ENCODE measurements at regions of chrX and their contacts with region 1.

Region 1: DNA sequence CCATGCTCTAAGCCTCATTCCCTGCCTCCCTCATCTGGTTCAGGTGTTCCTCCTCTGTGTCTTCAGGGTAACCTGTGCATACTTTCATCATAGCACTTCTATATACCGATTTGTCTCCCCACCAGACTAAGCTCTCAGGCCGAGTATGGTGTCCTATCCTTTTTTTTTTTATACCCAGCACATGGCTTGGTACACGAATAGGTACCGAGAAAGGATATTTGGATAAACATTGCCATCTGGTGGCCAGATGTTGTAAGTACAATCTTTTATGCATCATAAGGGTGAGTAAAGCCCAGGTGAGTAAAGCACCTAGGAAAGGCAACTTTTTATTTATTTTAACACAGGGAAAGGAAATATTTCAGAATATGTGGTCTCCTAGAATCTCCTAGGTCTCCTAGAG is 68.4 kb downstream of the MID2 start:
- DNase-seq: no peak
- ATAC-seq: no peak
- H3K4me3 Mint-ChIP-seq: no peak overlapping the region
- H3K27ac Mint-ChIP-seq: no peak overlapping the region
- H3K4me1 Mint-ChIP-seq: no peaks in the 10 kb centered on the region
- H3K27me3 Mint-ChIP-seq: peaks cover 8% of the 10 kb centered on the region
- CTCF ChIP-seq: no peak

Region 2: DNA sequence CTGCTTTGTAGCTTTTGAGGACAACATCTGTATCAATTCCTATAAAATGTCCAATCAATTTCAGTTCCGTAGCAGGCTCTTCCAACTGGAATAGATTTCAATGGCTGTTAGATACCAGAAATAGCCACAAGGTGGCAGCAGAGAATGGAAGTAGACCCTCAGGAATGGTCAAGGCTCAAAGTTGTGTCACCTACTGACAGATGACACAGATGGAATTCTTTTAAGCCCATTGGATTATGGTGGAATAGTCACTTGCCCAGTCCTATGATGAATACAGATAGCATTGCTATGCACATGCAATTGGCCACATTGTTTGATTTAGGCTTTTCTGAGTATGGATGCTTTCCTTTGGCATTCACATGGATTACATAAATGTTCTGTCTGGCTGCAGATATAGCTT is 1412.7 kb before region 1 on chrX:
- CTCF ChIA-PET with region 1: no interaction called
- POLR2A ChIA-PET with region 1: no interaction called
- intact Hi-C with region 1: loop called (anchors 2 kb)
- DNase-seq: no peak
- ATAC-seq: no peak
- H3K4me3 Mint-ChIP-seq: no peak overlapping the region
- H3K27ac Mint-ChIP-seq: no peak overlapping the region
- H3K4me1 Mint-ChIP-seq: peaks cover 7% of the 10 kb centered on the region
- H3K27me3 Mint-ChIP-seq: no peaks in the 10 kb centered on the region
- CTCF ChIP-seq: peak; percentile 18

Region 3: GRCh38 chrX:106894392-106894909 is 999.6 kb before region 1 on chrX:
- CTCF ChIA-PET with region 1: interaction called, 13 read pairs
- POLR2A ChIA-PET with region 1: no interaction called
- intact Hi-C with region 1: loop called (anchors 1 kb)
- DNase-seq: no peak
- ATAC-seq: no peak
- H3K4me3 Mint-ChIP-seq: no peak overlapping the region
- H3K27ac Mint-ChIP-seq: no peak overlapping the region
- H3K4me1 Mint-ChIP-seq: no peaks in the 10 kb centered on the region
- H3K27me3 Mint-ChIP-seq: no peaks in the 10 kb centered on the region
- CTCF ChIP-seq: no peak

Region 4: GRCh38 chrX:107025545-107025944 is 868.5 kb before region 1 on chrX:
- CTCF ChIA-PET with region 1: no interaction called
- POLR2A ChIA-PET with region 1: no interaction called
- intact Hi-C with region 1: loop called (anchors 1 kb)
- DNase-seq: no peak
- ATAC-seq: no peak
- H3K4me3 Mint-ChIP-seq: no peak overlapping the region
- H3K27ac Mint-ChIP-seq: no peak overlapping the region
- H3K4me1 Mint-ChIP-seq: no peaks in the 10 kb centered on the region
- H3K27me3 Mint-ChIP-seq: peaks cover 1% of the 10 kb centered on the region
- CTCF ChIP-seq: no peak

Region 5: DNA sequence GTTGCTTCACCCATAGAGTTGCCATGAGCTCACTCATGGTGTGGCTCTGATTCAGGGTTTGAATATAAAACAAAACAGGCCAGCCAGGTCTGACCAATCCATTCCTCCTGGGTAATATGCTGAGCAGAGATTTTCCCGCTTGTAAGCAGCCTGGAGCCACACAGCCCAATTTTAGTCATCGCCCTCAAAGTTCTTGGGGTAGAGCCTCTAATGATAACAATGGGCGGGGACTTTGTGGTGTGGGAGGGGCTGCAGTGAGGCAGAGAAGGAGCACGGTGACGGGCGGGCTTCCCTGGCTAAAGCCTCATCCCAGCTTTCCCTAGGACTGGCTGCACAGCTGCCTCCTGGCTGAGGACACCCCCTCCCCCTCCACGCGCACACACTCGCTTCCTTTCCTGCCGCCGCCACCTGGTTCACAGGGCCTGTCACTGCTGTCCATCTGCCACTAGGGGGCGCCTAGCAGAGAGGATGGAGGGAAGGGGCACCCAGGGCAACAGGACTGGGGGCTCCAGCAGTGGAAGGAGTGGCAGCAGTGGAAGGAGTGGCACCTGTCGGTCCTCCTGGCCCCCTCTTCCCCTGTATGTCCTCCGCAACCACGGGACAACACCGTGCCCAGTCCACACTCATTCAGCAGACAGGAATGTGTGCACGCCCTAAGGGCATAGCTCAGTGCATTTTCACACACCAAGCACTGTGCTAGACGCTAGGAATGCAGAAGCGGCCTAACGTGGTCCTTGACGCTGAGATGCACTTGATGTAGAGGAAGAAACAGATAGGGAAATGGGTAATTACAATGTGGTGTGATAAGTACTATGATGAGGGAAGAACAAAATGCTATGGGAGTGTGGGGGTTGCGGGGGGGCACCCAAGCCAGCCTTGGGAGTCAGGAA is 238.9 kb before region 1 on chrX:
- CTCF ChIA-PET with region 1: interaction called, 3 read pairs
- POLR2A ChIA-PET with region 1: no interaction called
- intact Hi-C with region 1: loop called (anchors 1 kb)
- DNase-seq: peak; percentile 40
- ATAC-seq: peak; percentile 86
- H3K4me3 Mint-ChIP-seq: no peak overlapping the region
- H3K27ac Mint-ChIP-seq: no peak overlapping the region
- H3K4me1 Mint-ChIP-seq: peaks cover 10% of the 10 kb centered on the region
- H3K27me3 Mint-ChIP-seq: no peaks in the 10 kb centered on the region
- CTCF ChIP-seq: no peak